ENCODE measurements at regions of chr3 and their contacts with region 1.

Region 1: GRCh38 chr3:167684388-167684993 is 30.7 kb upstream of the WDR49 start:
- DNase-seq: peak; percentile 74
- H3K4me3 ChIP-seq: no peak overlapping the region
- H3K27ac ChIP-seq: no peak overlapping the region
- H3K4me1 ChIP-seq: no peaks in the 10 kb centered on the region
- H3K27me3 ChIP-seq: no peaks in the 10 kb centered on the region
- CTCF ChIP-seq: peak; percentile 29 to 35
- POLR2A ChIP-seq: no peak

Region 2: GRCh38 chr3:167380004-167380689 is 304.3 kb before region 1 on chr3 and contains the start of gene ZBBX:
- CTCF ChIA-PET with region 1: interaction called, 96 read pairs
- POLR2A ChIA-PET with region 1: no interaction called
- dilution Hi-C with region 1: no loop called
- intact Hi-C with region 1: loop called (anchors 1 kb)
- DNase-seq: peak; percentile 89
- H3K4me3 ChIP-seq: peak within 1 kb of the TSS in 2 of 3 experiments; percentile 55 to 57
- H3K27ac ChIP-seq: no peak within 1 kb of the TSS
- H3K4me1 ChIP-seq: no peaks in the 10 kb centered on the region
- H3K27me3 ChIP-seq: no peaks in the 10 kb centered on the region
- CTCF ChIP-seq: peak; percentile 87 to 95
- POLR2A ChIP-seq: no peak
- total RNA-seq, gene ZBBX: not detected in 2 replicates

Region 3: DNA sequence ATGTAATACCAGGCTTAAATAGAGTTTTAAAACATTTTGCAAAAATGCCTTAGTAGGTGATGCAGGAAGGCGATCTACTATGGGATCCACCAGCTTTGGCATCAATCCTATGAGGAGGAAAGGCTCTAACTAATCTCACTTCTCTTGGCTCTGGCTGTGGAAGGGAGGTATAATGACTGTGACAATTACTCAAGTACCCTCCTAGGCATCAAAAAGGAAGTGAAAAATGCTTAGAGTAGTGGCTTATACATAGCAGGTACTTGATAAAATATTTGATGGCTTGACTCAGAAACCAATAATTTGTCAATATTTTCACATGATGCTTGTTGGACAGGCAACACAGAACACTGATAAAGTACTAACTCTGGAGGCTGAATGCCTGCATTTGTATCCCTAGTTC is 176.5 kb before region 1 on chr3:
- CTCF ChIA-PET with region 1: no interaction called
- POLR2A ChIA-PET with region 1: no interaction called
- dilution Hi-C with region 1: no loop called
- intact Hi-C with region 1: no loop called
- DNase-seq: no peak
- H3K4me3 ChIP-seq: no peak overlapping the region
- H3K27ac ChIP-seq: no peak overlapping the region
- H3K4me1 ChIP-seq: no peaks in the 10 kb centered on the region
- H3K27me3 ChIP-seq: no peaks in the 10 kb centered on the region
- CTCF ChIP-seq: no peak
- POLR2A ChIP-seq: no peak

Region 4: GRCh38 chr3:167653760-167654159 is 30.7 kb before region 1 on chr3 and contains the start of gene WDR49:
- CTCF ChIA-PET with region 1: interaction called, 10 read pairs
- POLR2A ChIA-PET with region 1: no interaction called
- dilution Hi-C with region 1: no loop called
- intact Hi-C with region 1: no loop called
- DNase-seq: peak; percentile 19
- H3K4me3 ChIP-seq: no peak within 1 kb of the TSS
- H3K27ac ChIP-seq: no peak within 1 kb of the TSS
- H3K4me1 ChIP-seq: no peaks in the 10 kb centered on the region
- H3K27me3 ChIP-seq: no peaks in the 10 kb centered on the region
- CTCF ChIP-seq: no peak
- POLR2A ChIP-seq: no peak
- total RNA-seq, gene WDR49: 0.28 TPM in 1 of 2 replicates, not detected in the other

Region 5: GRCh38 chr3:167700046-167700445 is 15.6 kb after region 1 on chr3:
- CTCF ChIA-PET with region 1: interaction called, 20 read pairs
- POLR2A ChIA-PET with region 1: no interaction called
- dilution Hi-C with region 1: no loop called
- intact Hi-C with region 1: no loop called
- DNase-seq: no peak
- H3K4me3 ChIP-seq: no peak overlapping the region
- H3K27ac ChIP-seq: no peak overlapping the region
- H3K4me1 ChIP-seq: no peaks in the 10 kb centered on the region
- H3K27me3 ChIP-seq: no peaks in the 10 kb centered on the region
- CTCF ChIP-seq: no peak
- POLR2A ChIP-seq: no peak